CD8-positive, alpha-beta T cell (primary cell): ENCODE measurements at regions of chr3 and their contacts with region 1.

Region 1: DNA sequence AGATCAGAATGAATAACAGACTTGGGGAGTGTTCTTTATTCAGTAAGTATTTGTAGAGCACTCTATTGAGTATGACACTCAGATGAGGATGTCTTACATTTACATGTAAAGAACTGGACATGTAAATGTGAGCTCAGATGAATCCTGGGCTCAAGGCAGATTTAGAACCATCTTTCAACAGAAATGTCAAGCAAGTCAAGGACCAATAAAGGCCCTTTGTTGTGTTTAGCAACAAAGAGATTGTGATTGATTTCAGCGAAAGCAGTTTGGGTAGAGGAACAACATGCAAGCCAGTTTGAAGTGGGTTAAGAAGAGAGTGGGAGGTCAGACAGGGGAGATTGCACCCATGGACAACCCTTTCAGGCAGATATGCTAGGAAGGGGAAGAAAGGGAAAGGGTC is 194.2 kb upstream of the DNAJC19 start:
- DNase-seq: no peak
- ATAC-seq: no peak
- H3K4me3 ChIP-seq: no peak overlapping the region
- H3K4me3 Mint-ChIP-seq: no peak overlapping the region
- H3K27ac ChIP-seq: no peak overlapping the region
- H3K27ac Mint-ChIP-seq: no peak overlapping the region
- H3K4me1 ChIP-seq: no peaks in the 10 kb centered on the region
- H3K4me1 Mint-ChIP-seq: no peaks in the 10 kb centered on the region
- H3K27me3 ChIP-seq: no peaks in the 10 kb centered on the region
- H3K27me3 Mint-ChIP-seq: peaks cover 3% of the 10 kb centered on the region
- CTCF ChIP-seq: no peak

Region 2: DNA sequence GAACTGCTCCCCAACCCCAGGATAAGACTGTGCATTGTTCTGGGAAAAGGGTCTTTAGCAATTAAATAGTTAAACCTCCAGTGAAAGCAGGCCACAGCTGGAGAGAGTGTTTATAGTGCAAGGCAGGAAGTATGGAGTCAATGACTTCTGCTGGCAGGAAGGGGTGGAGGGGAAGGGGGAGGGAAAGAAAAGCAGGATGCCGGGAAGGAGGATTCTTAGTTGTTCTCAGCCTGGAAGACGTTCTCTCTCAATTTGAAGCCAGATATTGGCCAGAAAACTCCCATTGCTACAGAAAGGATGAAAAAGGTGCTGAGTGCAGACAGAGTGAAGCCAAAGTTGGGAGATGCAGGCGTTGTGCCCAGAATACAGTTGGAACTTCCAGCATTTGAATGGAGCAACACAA is 1656.8 kb before region 1 on chr3:
- CTCF ChIA-PET with region 1: no interaction called
- POLR2A ChIA-PET with region 1: no interaction called
- intact Hi-C with region 1: no loop called
- DNase-seq: no peak
- ATAC-seq: no peak
- H3K4me3 ChIP-seq: no peak overlapping the region
- H3K4me3 Mint-ChIP-seq: no peak overlapping the region
- H3K27ac ChIP-seq: no peak overlapping the region
- H3K27ac Mint-ChIP-seq: no peak overlapping the region
- H3K4me1 ChIP-seq: no peaks in the 10 kb centered on the region
- H3K4me1 Mint-ChIP-seq: no peaks in the 10 kb centered on the region
- H3K27me3 ChIP-seq: peaks cover 0 to 3% of the 10 kb centered on the region in 2 experiments
- H3K27me3 Mint-ChIP-seq: peaks cover 3% of the 10 kb centered on the region
- CTCF ChIP-seq: no peak

Region 3: GRCh38 chr3:181133832-181134231 is 49.9 kb before region 1 on chr3:
- CTCF ChIA-PET with region 1: no interaction called
- POLR2A ChIA-PET with region 1: no interaction called
- intact Hi-C with region 1: loop called in 1 of 2 experiments (anchors 10 kb)
- DNase-seq: no peak
- ATAC-seq: no peak
- H3K4me3 ChIP-seq: no peak overlapping the region
- H3K4me3 Mint-ChIP-seq: no peak overlapping the region
- H3K27ac ChIP-seq: no peak overlapping the region
- H3K27ac Mint-ChIP-seq: no peak overlapping the region
- H3K4me1 ChIP-seq: no peaks in the 10 kb centered on the region
- H3K4me1 Mint-ChIP-seq: no peaks in the 10 kb centered on the region
- H3K27me3 ChIP-seq: no peaks in the 10 kb centered on the region
- H3K27me3 Mint-ChIP-seq: peaks cover 6% of the 10 kb centered on the region
- CTCF ChIP-seq: no peak